SK-N-SH (cell line): ENCODE measurements at regions of chr7 and their contacts with region 1.

Region 1: DNA sequence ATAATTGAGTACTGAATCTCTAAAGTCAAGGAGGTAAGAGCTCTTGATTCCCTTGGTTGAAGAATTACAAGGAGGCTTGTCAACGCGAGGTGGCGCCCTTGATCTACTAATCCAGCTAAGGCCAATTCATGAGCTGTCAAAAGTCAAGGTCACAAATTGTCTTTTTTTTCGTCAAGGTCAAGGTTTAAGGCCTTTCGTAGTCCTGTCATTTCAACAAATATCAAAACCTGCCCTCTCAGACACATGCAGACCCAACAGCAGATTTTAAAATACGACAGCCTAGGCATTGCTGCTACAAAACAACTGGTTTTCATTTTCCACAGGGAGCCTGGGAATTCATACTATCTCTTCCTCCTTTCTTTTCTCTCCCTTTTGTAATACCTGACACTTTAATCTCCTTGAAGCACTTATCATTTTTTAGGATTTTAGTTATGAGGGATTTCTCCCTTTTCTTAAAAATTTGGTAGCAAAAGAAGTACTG is 3.6 kb downstream of the HOXA13 start:
- DNase-seq: peak; percentile 83
- H3K4me3 ChIP-seq: peak overlapping the region in 1 of 2 experiments; percentile 15; a peak in 1 of 4 replicates
- H3K27ac ChIP-seq: no peak overlapping the region
- H3K4me1 ChIP-seq: peaks cover 0 to 4% of the 10 kb centered on the region in 2 experiments; a peak in 1 of 4 replicates
- H3K27me3 ChIP-seq: peaks cover 82% of the 10 kb centered on the region
- CTCF ChIP-seq: peak; percentile 99
- EP300 ChIP-seq: no peak
- RAD21 ChIP-seq: peak; percentile 97

Region 2: DNA sequence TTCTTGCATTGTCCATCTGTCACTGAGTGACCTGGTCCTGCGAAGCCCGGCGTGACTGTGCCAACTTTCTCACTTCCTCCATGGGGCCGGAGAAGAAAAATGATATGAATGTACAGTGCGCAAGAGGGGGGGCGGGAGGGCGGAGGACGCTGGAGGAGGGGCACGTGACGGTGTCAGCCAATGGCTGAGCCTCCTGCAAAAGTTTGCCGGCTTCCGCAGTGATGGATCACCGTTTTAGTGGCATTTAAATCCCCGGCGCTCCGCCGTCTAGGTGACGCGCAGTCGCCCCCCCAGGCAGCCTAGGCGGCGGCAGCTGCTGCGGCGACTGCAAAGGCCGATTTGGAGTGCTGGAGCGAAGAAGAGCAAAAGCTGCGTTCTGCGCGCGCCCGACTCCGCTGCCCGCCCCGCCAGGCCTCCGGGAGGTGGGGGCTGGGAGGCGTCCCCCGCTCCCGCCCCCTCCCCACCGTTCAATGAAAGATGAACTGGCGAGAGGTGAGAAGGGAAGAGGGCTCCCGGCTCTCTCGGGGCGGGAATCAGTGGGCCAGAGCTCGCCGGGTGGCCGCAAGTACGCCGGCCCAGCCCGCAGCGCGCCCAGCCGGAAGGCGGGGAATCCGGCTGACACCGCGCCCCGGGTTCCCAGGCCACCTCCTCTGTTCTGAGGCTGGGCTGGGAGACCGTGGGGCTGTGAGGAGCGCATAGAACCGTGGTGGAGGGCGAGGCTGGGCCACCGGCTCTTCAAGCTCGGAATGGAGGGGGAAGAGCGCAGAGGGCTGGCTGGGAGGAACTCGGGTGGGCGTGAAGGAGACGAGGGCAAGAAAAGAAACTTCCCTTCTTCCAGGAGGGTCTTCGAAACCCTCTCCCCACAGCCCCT is 100.2 kb before region 1 on chr7 and contains the start of gene HOXA1:
- CTCF ChIA-PET with region 1: no interaction called
- POLR2A ChIA-PET with region 1: no interaction called
- DNase-seq: no peak
- H3K4me3 ChIP-seq: peak within 1 kb of the TSS in 1 of 2 experiments; percentile 24; a peak in 2 of 4 replicates
- H3K27ac ChIP-seq: no peak within 1 kb of the TSS
- H3K4me1 ChIP-seq: no peaks in the 10 kb centered on the region; a peak in 1 of 4 replicates
- H3K27me3 ChIP-seq: peaks cover 97% of the 10 kb centered on the region
- CTCF ChIP-seq: no peak
- EP300 ChIP-seq: no peak
- RAD21 ChIP-seq: no peak
- polyA plus RNA-seq, gene HOXA1: not detected in 2 replicates

Region 3: GRCh38 chr7:27179503-27180430 is 16.6 kb before region 1 on chr7:
- CTCF ChIA-PET with region 1: interaction called, 84 read pairs
- POLR2A ChIA-PET with region 1: no interaction called
- DNase-seq: peak; percentile 93
- H3K4me3 ChIP-seq: peak overlapping the region; percentile 5 to 36; a peak in 2 of 4 replicates
- H3K27ac ChIP-seq: no peak overlapping the region
- H3K4me1 ChIP-seq: peaks cover 4 to 10% of the 10 kb centered on the region in 2 experiments; a peak in 1 of 4 replicates
- H3K27me3 ChIP-seq: peaks cover 97% of the 10 kb centered on the region
- CTCF ChIP-seq: peak; percentile 100
- EP300 ChIP-seq: no peak
- RAD21 ChIP-seq: no peak

Region 4: GRCh38 chr7:27576360-27576944 is 380.1 kb after region 1 on chr7:
- CTCF ChIA-PET with region 1: interaction called, 29 read pairs
- POLR2A ChIA-PET with region 1: no interaction called
- DNase-seq: peak; percentile 41
- H3K4me3 ChIP-seq: no peak overlapping the region
- H3K27ac ChIP-seq: no peak overlapping the region
- H3K4me1 ChIP-seq: 0 out of 4 replicates have a peak, but pooled peaks cover 0 to 4% of the 10 kb centered on the region in 2 experiments
- H3K27me3 ChIP-seq: no peaks in the 10 kb centered on the region
- CTCF ChIP-seq: peak; percentile 94
- EP300 ChIP-seq: no peak
- RAD21 ChIP-seq: peak; percentile 83

Region 5: GRCh38 chr7:27774717-27775328 is 578.5 kb after region 1 on chr7:
- CTCF ChIA-PET with region 1: interaction called, 15 read pairs
- POLR2A ChIA-PET with region 1: no interaction called
- DNase-seq: peak; percentile 9
- H3K4me3 ChIP-seq: no peak overlapping the region
- H3K27ac ChIP-seq: no peak overlapping the region
- H3K4me1 ChIP-seq: peaks cover 0 to 4% of the 10 kb centered on the region in 2 experiments; a peak in 1 of 4 replicates
- H3K27me3 ChIP-seq: no peaks in the 10 kb centered on the region
- CTCF ChIP-seq: peak; percentile 83
- EP300 ChIP-seq: no peak
- RAD21 ChIP-seq: peak; percentile 70

Region 6: GRCh38 chr7:27921081-27921836 is 724.9 kb after region 1 on chr7:
- CTCF ChIA-PET with region 1: interaction called, 66 read pairs
- POLR2A ChIA-PET with region 1: interaction called, 3 read pairs
- DNase-seq: peak; percentile 73
- H3K4me3 ChIP-seq: peak overlapping the region in 1 of 2 experiments; percentile 17; a peak in 1 of 4 replicates
- H3K27ac ChIP-seq: peak overlapping the region in 1 of 2 experiments; percentile 43; a peak in 1 of 4 replicates
- H3K4me1 ChIP-seq: peaks cover 0 to 8% of the 10 kb centered on the region in 2 experiments; a peak in 2 of 4 replicates
- H3K27me3 ChIP-seq: no peaks in the 10 kb centered on the region
- CTCF ChIP-seq: peak; percentile 91
- EP300 ChIP-seq: no peak
- RAD21 ChIP-seq: peak; percentile 92

Region 7: DNA sequence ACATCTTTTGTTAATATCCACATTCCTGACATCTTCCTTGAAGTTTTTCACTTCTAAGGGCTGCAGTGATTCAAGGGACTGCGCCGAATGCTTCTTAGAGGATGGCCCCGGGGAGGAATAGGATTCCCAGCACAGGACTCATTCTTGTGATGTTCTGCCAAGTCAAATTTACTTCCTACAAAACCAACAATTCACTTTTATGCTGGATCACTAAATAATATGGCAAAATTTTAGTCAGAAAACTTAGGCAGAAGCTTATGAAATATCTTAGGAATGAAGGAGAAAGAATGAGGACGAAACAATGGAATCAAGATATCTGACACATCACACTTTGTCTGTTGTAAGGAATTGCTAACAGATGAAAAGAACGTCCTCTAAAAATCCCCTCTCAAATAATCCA is 832.7 kb after region 1 on chr7:
- CTCF ChIA-PET with region 1: interaction called, 25 read pairs
- POLR2A ChIA-PET with region 1: no interaction called
- DNase-seq: no peak
- H3K4me3 ChIP-seq: no peak overlapping the region
- H3K27ac ChIP-seq: peak overlapping the region; percentile 11 to 34; a peak in 3 of 4 replicates
- H3K4me1 ChIP-seq: peaks cover 2 to 11% of the 10 kb centered on the region in 2 experiments; a peak in 3 of 4 replicates
- H3K27me3 ChIP-seq: no peaks in the 10 kb centered on the region
- CTCF ChIP-seq: no peak
- EP300 ChIP-seq: peak in 1 of 2 experiments; percentile 33; a peak in 1 of 4 replicates
- RAD21 ChIP-seq: no peak

Region 8: GRCh38 chr7:28069807-28070206 is 873.5 kb after region 1 on chr7:
- CTCF ChIA-PET with region 1: interaction called, 10 read pairs
- POLR2A ChIA-PET with region 1: no interaction called
- DNase-seq: no peak
- H3K4me3 ChIP-seq: no peak overlapping the region
- H3K27ac ChIP-seq: peak overlapping the region in 1 of 2 experiments; percentile 60; a peak in 1 of 4 replicates
- H3K4me1 ChIP-seq: peaks cover 6 to 23% of the 10 kb centered on the region in 2 experiments; a peak in 2 of 4 replicates
- H3K27me3 ChIP-seq: no peaks in the 10 kb centered on the region
- CTCF ChIP-seq: no peak
- EP300 ChIP-seq: no peak
- RAD21 ChIP-seq: no peak